ENCODE measurements at regions of chr15 and their contacts with region 1.

Region 1: GRCh38 chr15:73741321-73741836 is 11.8 kb downstream of the INSYN1 start:
- DNase-seq: no peak
- H3K4me3 ChIP-seq: no peak overlapping the region
- H3K27ac ChIP-seq: no peak overlapping the region
- H3K4me1 ChIP-seq: peaks cover 5 to 12% (median 8%) of the 10 kb centered on the region in 4 experiments; a peak in 6 of 7 replicates
- H3K27me3 ChIP-seq: no peaks in the 10 kb centered on the region
- CTCF ChIP-seq: no peak
- EP300 ChIP-seq: no peak
- POLR2A ChIP-seq: no peak
- RAD21 ChIP-seq: no peak

Region 2: DNA sequence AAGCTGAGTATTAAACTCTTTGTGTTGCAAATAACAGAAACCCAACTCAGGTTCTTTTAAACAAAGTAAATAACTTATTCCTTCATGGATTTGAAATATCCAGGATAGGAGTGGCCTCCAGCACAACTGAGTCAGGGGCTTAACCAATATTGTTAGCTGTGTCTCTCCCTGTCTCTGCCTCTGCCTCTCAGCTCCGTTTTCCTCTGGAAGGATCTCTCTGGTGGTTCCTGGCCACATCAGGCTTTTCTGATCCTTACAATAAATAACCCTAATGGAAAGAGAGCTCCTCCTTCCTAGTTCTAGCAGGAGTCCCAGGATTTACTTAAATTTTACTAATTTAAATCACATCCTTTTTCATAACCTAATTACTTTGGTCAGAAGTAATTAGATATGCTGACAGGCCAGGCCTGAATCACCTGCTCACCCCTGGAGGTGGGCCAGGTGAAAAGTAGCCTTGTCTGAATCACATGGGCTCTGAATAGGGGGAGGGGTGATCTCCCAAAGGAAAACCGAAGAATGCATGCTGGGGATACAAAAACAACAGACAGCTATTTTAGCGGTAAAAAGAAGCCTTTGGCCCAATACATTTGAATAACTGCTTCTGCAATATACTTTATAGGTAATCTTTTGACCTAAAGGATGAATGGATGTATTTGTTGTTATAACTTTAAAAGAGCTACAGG is 223.1 kb before region 1 on chr15:
- CTCF ChIA-PET with region 1: no interaction called
- POLR2A ChIA-PET with region 1: no interaction called
- DNase-seq: peak in 1 of 2 experiments; percentile 7
- H3K4me3 ChIP-seq: no peak overlapping the region; a peak in 1 of 8 replicates
- H3K27ac ChIP-seq: no peak overlapping the region
- H3K4me1 ChIP-seq: peaks cover 3 to 11% (median 5%) of the 10 kb centered on the region in 4 experiments; a peak in 4 of 7 replicates
- H3K27me3 ChIP-seq: no peaks in the 10 kb centered on the region
- CTCF ChIP-seq: no peak
- EP300 ChIP-seq: no peak
- POLR2A ChIP-seq: no peak
- RAD21 ChIP-seq: no peak

Region 3: DNA sequence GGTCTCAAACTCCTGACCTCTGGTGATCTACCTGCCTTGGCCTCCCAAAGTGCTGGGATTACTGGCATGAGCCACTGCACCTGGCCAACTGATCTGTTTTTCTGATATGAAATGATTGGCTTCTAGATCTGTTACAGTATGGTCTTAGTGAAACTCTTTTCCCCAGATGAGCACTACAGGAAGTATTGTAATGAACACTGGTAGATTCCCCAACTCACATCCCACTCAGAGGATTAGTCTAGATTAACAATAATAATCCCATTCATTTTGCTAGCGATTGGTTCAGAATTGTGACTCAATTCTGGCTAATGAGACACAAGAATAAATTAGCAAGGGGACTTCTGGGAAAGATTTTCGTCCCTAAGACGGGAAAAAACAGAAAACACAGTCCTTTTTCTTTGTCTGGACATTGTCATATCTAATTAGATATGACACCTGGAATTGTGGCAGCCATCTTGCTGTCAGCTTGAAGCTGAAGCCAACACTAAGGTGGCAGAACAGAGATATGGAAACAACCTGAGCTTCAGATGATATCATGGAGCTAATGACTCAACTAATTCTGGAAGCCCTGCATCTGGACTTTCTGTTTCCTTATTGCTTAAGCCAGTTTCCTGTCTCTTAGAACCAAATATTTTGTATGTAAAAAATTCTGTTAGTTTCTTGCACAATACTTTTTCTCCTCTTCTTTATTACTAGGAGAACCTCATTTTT is 90.8 kb before region 1 on chr15:
- CTCF ChIA-PET with region 1: no interaction called
- POLR2A ChIA-PET with region 1: no interaction called
- DNase-seq: no peak
- H3K4me3 ChIP-seq: no peak overlapping the region
- H3K27ac ChIP-seq: no peak overlapping the region
- H3K4me1 ChIP-seq: no peaks in the 10 kb centered on the region
- H3K27me3 ChIP-seq: no peaks in the 10 kb centered on the region
- CTCF ChIP-seq: no peak
- EP300 ChIP-seq: no peak
- POLR2A ChIP-seq: no peak
- RAD21 ChIP-seq: no peak

Region 4: GRCh38 chr15:73753250-73754130 is 12.1 kb after region 1 on chr15 and contains the start of gene INSYN1:
- CTCF ChIA-PET with region 1: interaction called, 20 read pairs
- POLR2A ChIA-PET with region 1: interaction called, 4 read pairs
- DNase-seq: peak; percentile 21 to 67
- H3K4me3 ChIP-seq: peak within 1 kb of the TSS; percentile 43 to 87 (median 60)
- H3K27ac ChIP-seq: no peak within 1 kb of the TSS
- H3K4me1 ChIP-seq: peaks cover 11 to 23% (median 17%) of the 10 kb centered on the region in 4 experiments
- H3K27me3 ChIP-seq: peaks cover 0 to 24% (median 13%) of the 10 kb centered on the region in 4 experiments; a peak in 6 of 7 replicates
- CTCF ChIP-seq: no peak
- EP300 ChIP-seq: no peak
- POLR2A ChIP-seq: no peak
- RAD21 ChIP-seq: no peak; a peak in 1 of 4 replicates
- total RNA-seq, gene INSYN1: 10.2 and 13.1 TPM in 2 replicates